CD14-positive monocyte (primary cell): ENCODE measurements at regions of chr17 and their contacts with region 1.

Region 1: DNA sequence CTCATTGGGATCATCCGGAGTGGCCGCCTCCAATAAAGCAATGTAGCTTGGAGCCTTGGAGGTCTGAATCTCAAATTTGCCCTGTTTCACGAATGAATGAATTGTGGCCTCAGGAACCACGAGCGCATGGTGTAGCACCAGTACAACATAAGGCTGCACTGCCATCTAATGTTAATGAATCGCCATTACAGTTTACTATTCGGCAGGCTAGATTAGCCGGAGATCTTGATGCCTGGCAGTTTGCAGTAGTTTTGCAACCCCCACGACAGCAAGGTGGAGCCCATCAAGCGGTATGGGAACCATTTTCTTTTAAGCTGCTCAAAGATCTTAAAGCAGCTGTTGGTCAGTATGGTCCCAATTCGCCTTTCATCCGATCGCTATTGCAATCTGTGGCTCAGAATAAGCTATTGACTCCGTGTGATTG is 18.8 kb downstream of the ALOX15B start:
- DNase-seq: peak; percentile 60 to 88 (median 76)
- H3K4me3 ChIP-seq: no peak overlapping the region
- H3K4me3 Mint-ChIP-seq: no peak overlapping the region
- H3K27ac ChIP-seq: no peak overlapping the region
- H3K27ac Mint-ChIP-seq: peak overlapping the region in 2 of 7 donors; percentile 49 to 95
- H3K4me1 ChIP-seq: peaks cover 39 to 42% of the 10 kb centered on the region in 2 donors
- H3K4me1 Mint-ChIP-seq: peaks cover 37% of the 10 kb centered on the region
- H3K27me3 ChIP-seq: peaks cover 4 to 6% of the 10 kb centered on the region in 2 donors
- H3K27me3 Mint-ChIP-seq: peaks cover 12 to 21% (median 14%) of the 10 kb centered on the region in 3 donors
- CTCF ChIP-seq: peak; percentile 81

Region 2: DNA sequence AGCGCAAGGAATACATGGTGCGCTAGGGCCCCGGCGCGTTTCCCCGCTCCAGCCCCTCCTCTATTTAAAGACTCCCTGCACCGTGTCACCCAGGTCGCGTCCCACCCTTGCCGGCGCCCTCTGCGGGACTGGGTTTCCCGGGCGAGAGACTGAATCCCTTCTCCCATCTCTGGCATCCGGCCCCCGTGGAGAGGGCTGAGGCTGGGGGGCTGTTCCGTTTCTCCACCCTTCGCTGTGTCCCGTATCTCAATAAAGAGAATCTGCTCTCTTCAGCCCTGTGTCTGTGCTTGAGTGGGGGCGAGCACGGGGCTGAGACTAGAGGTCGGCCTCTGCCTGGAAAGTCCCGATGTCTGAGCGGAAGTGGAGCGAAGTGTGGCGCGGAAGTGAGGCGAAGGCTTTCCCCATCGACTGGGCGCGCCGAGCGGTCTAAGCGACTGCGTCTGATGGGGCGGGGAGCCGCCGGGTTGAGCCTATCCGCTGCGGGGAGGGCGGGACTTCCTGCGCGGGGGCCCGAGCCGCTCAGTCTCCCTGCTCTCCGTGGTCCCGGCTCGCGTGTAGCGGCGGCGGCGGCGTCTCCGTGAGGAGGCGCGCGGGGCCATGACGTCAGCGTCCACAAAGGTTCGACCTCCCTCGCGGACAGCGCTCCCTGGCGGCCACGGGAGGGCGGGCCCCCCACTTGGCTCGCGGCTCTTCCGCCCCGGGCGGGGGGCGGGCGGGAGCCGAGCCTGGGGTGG is 1043.3 kb before region 1 on chr17:
- intact Hi-C with region 1: loop called in 1 of 2 experiments (anchors 5 kb)
- DNase-seq: peak; percentile 99 to 100 (median 99)
- H3K4me3 ChIP-seq: peak overlapping the region; percentile 95 to 98 (median 97)
- H3K4me3 Mint-ChIP-seq: peak overlapping the region; percentile 94 to 98
- H3K27ac ChIP-seq: peak overlapping the region; percentile 98 to 100
- H3K27ac Mint-ChIP-seq: peak overlapping the region; percentile 99 to 100 (median 100)
- H3K4me1 ChIP-seq: peaks cover 49 to 66% of the 10 kb centered on the region in 2 donors
- H3K4me1 Mint-ChIP-seq: peaks cover 60% of the 10 kb centered on the region
- H3K27me3 ChIP-seq: no peaks in the 10 kb centered on the region
- H3K27me3 Mint-ChIP-seq: peaks cover 2 to 9% (median 3%) of the 10 kb centered on the region in 3 donors
- CTCF ChIP-seq: peak; percentile 92

Region 3: GRCh38 chr17:7867881-7868329 is 189.8 kb before region 1 on chr17:
- intact Hi-C with region 1: loop called in 1 of 2 experiments (anchors 5 kb)
- DNase-seq: peak in 1 of 3 donors; percentile 62
- H3K4me3 ChIP-seq: peak overlapping the region in 1 of 3 experiments; percentile 58
- H3K4me3 Mint-ChIP-seq: peak overlapping the region; percentile 47 to 86
- H3K27ac ChIP-seq: peak overlapping the region; percentile 19 to 74
- H3K27ac Mint-ChIP-seq: peak overlapping the region; percentile 70 to 92 (median 85)
- H3K4me1 ChIP-seq: peaks cover 47 to 61% of the 10 kb centered on the region in 2 donors
- H3K4me1 Mint-ChIP-seq: peaks cover 51% of the 10 kb centered on the region
- H3K27me3 ChIP-seq: no peaks in the 10 kb centered on the region
- H3K27me3 Mint-ChIP-seq: no peaks in the 10 kb centered on the region
- CTCF ChIP-seq: no peak

Region 4: DNA sequence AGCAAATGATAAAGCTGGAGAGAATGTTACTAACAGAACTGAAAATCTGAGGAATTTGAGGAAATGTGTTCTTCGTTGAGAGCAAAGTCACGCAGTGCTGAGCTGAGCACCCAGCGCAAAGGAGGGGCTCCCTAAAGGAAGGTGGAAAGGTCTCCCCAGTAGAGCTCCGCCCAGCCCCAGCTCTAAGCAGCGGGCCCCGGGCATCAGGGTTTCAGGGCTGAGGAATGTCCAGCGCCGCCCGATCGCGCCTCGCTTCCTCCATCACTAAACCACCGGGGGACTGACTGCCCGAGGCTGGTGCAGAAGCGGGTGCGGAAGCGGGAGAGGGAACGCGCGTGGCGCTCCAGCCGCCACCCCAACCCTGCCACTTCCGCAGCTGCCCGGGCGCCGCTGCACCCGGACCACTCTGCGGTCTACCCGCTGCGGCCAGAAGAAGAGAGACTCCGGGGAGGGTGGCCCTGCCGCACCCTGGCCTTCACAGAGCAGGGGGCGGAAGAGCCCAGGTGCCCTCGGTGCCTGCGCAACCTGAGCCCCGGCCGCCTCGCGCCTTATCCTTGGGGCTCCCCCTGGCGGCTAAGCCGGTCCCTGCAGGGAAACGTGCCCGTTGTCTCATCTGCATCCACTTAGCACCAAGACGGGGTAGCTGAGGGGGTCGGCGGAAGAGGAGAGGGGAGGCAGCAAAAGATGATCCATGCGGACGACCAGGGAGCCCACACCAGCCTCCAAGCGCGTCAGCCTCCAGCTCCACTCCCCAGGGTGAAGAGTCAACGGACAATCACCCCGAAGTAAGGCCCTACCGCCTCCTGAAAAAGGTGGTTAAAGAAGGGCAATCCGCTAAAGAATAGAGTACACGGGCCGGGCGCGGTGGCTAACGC is 67.7 kb before region 1 on chr17:
- intact Hi-C with region 1: loop called in 1 of 2 experiments (anchors 5 kb)
- DNase-seq: peak; percentile 68 to 73 (median 70)
- H3K4me3 ChIP-seq: peak overlapping the region; percentile 47 to 84 (median 50)
- H3K4me3 Mint-ChIP-seq: peak overlapping the region; percentile 73 to 85
- H3K27ac ChIP-seq: peak overlapping the region; percentile 54 to 65
- H3K27ac Mint-ChIP-seq: peak overlapping the region in 5 of 7 donors; percentile 22 to 87 (median 77)
- H3K4me1 ChIP-seq: peaks cover 21 to 29% of the 10 kb centered on the region in 2 donors
- H3K4me1 Mint-ChIP-seq: peaks cover 23% of the 10 kb centered on the region
- H3K27me3 ChIP-seq: no peaks in the 10 kb centered on the region
- H3K27me3 Mint-ChIP-seq: no peaks in the 10 kb centered on the region
- CTCF ChIP-seq: peak; percentile 99

Region 5: DNA sequence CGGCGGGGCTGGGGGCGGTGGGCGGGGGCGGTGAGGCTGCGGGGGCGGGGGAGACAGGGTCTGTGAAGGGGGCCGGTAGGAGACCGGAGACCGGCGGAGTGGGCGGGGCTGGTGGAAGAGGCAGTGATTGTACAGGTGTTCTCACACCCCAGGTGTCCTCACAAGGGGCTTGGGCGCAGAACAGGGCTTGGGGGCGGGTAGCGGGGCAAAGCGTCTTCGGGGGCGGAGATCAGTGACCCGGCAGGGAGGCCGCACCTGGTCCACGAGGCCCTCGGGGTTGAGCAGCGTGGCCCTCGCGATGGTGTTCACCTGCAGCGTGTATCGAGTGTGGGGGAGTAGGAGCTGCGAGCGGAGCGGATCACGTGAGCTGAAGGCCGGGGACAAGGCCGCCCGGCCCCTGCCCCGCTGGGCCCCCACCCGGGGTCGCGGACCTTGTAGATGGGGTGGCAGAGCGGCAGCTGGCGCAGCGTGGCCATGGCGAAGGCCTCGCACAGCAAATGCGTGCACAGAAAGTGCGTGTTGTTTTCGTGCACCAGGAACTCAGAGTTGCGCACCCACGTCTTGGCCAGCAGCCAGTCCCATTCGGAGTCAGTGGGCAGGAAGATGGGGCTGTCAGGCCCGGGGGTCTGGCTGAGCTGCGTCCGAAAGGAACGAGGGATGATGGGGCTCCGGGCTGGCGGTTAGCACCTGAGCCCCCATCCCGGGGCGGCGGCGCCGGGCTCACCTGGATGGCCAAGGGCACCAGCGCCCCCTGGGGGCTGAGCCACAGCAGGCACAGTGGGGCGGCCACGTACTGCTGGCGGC is 52.2 kb after region 1 on chr17:
- intact Hi-C with region 1: loop called (anchors 2 to 5 kb)
- DNase-seq: peak in 2 of 3 donors; percentile 55 to 57
- H3K4me3 ChIP-seq: peak overlapping the region in 1 of 3 experiments; percentile 59
- H3K4me3 Mint-ChIP-seq: peak overlapping the region in 1 of 2 donors; percentile 79
- H3K27ac ChIP-seq: no peak overlapping the region
- H3K27ac Mint-ChIP-seq: no peak overlapping the region
- H3K4me1 ChIP-seq: peaks cover 9 to 11% of the 10 kb centered on the region in 2 donors
- H3K4me1 Mint-ChIP-seq: peaks cover 9% of the 10 kb centered on the region
- H3K27me3 ChIP-seq: peaks cover 3 to 36% of the 10 kb centered on the region in 2 donors
- H3K27me3 Mint-ChIP-seq: peaks cover 31 to 62% (median 37%) of the 10 kb centered on the region in 3 donors
- CTCF ChIP-seq: peak; percentile 99

Region 6: GRCh38 chr17:8288336-8289102 is 230.8 kb after region 1 on chr17 and contains the start of gene RANGRF:
- intact Hi-C with region 1: no loop called
- DNase-seq: peak; percentile 72 to 81 (median 75)
- H3K4me3 ChIP-seq: peak within 1 kb of the TSS; percentile 76 to 90 (median 84)
- H3K4me3 Mint-ChIP-seq: peak within 1 kb of the TSS; percentile 93 to 96
- H3K27ac ChIP-seq: peak within 1 kb of the TSS; percentile 77 to 84
- H3K27ac Mint-ChIP-seq: peak within 1 kb of the TSS; percentile 89 to 97 (median 95)
- H3K4me1 ChIP-seq: peaks cover 31 to 44% of the 10 kb centered on the region in 2 donors
- H3K4me1 Mint-ChIP-seq: peaks cover 47% of the 10 kb centered on the region
- H3K27me3 ChIP-seq: no peaks in the 10 kb centered on the region
- H3K27me3 Mint-ChIP-seq: peaks cover 0 to 1% (median 0%) of the 10 kb centered on the region in 3 donors
- CTCF ChIP-seq: no peak
- polyA plus RNA-seq, gene RANGRF: 27.3 to 34.3 (median 31.7) TPM